Activated CD8-positive, alpha-beta T cell treated with anti-CD3 and anti-CD28 coated beads, Interleukin-2, amount 10 ng/mL, durations not matched to agents 7 days and 5 days (primary cell): ENCODE measurements at regions of chr19 and their contacts with region 1.

Region 1: DNA sequence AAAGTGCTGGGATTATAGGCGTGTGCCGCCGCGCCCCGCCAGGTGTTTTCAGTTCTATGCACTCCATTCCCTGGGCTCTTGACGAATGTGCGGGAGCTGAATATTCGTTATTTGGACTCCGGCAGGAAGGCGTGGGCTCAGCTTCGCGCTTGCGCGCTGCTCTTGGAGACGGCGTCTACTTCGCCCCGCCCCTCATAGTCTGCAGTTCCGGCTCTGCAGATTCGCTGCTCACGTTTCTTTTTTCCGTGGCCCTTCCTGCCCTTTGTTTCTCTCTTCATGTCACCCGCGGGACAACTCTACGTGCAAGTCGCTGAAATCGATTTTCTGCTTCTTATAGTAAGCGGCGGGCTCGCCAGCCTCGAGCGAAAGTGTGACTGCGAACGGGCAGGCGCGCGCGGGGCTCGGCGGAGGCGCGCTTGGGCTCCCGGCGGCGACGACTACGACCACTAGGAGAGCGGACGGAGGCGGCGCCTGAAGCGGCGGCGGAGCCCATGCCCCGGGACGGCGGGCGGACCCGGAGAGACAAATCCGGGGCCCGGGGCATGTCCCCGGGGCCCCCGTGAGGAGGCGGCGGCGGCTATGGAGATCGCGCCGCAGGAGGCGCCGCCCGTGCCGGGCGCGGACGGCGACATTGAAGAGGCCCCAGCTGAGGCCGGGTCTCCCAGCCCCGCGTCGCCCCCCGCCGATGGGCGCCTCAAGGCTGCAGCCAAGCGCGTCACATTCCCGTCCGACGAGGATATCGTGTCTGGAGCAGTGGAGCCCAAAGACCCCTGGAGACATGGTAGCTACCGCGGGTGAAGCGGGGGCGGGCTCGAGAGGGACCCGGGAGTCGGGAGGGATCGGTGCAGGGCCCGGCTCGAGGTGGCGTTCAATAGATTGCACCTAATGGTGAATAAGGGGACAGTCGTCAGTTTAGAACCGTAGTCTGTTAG is at the start of gene PPP1R37:
- DNase-seq: peak; percentile 94
- ATAC-seq: peak; percentile 82
- H3K4me3 Mint-ChIP-seq: peak within 1 kb of the TSS; percentile 83
- H3K27ac Mint-ChIP-seq: peak within 1 kb of the TSS; percentile 95
- H3K4me1 Mint-ChIP-seq: peaks cover 70% of the 10 kb centered on the region
- H3K27me3 Mint-ChIP-seq: no peaks in the 10 kb centered on the region
- total RNA-seq, gene PPP1R37: 28.3 to 29.2 TPM

Region 2: DNA sequence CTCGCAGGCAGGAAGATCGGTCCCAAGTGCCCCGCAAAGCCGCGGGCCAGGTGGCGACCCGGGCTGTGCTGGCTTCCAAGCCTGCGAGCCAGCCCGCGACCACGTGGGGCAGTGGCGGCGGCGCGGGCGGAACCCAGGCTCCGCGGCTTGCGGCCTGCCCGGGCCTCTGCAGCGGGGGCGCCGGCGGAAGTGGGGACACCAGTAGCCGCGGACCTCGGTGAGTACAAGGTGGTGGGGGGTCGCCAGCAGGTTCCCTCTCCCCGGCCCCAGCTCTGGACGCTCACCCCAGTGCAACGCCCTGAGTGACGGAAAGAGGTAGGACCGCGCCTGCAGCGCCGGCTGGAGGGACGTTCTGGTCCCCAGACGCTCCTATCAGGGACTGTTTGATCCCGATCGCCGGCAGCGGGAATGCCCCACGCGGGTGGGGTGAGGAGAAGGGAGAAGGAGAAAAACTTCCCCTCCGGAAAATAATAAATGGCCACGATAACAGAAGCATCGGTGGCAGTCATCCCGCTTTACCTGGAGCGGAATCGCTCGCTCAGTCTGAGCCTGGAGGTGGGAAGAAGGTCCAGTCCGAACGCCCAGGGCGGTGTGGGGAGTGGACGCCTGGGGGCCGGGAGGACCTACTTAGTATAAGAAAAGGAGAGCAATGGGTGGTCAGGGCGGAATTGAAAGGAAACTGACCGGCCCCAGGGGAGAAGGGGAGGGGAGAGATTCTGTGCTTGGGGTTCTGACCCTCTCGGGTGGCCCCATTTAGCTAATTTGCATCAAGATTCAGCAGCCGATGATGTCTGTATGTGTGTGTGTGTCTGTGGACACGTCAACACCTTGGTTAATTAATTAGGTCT is 13.7 kb before region 1 on chr19 and contains the start of gene GEMIN7:
- CTCF ChIA-PET with region 1: interaction called, 5 read pairs
- POLR2A ChIA-PET with region 1: interaction called, 13 read pairs
- DNase-seq: peak; percentile 82
- ATAC-seq: peak; percentile 63
- H3K4me3 Mint-ChIP-seq: peak within 1 kb of the TSS; percentile 98
- H3K27ac Mint-ChIP-seq: peak within 1 kb of the TSS; percentile 86
- H3K4me1 Mint-ChIP-seq: peaks cover 55% of the 10 kb centered on the region
- H3K27me3 Mint-ChIP-seq: no peaks in the 10 kb centered on the region
- total RNA-seq, gene GEMIN7: 30.2 to 31.7 TPM

Region 3: GRCh38 chr19:45103156-45103507 is 10.1 kb after region 1 on chr19:
- CTCF ChIA-PET with region 1: interaction called, 12 read pairs
- POLR2A ChIA-PET with region 1: interaction called, 29 read pairs
- DNase-seq: peak; percentile 71
- ATAC-seq: peak; percentile 85
- H3K4me3 Mint-ChIP-seq: peak overlapping the region; percentile 25
- H3K27ac Mint-ChIP-seq: peak overlapping the region; percentile 80
- H3K4me1 Mint-ChIP-seq: peaks cover 52% of the 10 kb centered on the region
- H3K27me3 Mint-ChIP-seq: no peaks in the 10 kb centered on the region

Region 4: GRCh38 chr19:45125926-45126493 is 33.0 kb after region 1 on chr19:
- CTCF ChIA-PET with region 1: interaction called, 18 read pairs
- POLR2A ChIA-PET with region 1: no interaction called
- DNase-seq: peak; percentile 82
- ATAC-seq: peak; percentile 89
- H3K4me3 Mint-ChIP-seq: no peak overlapping the region
- H3K27ac Mint-ChIP-seq: no peak overlapping the region
- H3K4me1 Mint-ChIP-seq: peaks cover 36% of the 10 kb centered on the region
- H3K27me3 Mint-ChIP-seq: no peaks in the 10 kb centered on the region

Region 5: DNA sequence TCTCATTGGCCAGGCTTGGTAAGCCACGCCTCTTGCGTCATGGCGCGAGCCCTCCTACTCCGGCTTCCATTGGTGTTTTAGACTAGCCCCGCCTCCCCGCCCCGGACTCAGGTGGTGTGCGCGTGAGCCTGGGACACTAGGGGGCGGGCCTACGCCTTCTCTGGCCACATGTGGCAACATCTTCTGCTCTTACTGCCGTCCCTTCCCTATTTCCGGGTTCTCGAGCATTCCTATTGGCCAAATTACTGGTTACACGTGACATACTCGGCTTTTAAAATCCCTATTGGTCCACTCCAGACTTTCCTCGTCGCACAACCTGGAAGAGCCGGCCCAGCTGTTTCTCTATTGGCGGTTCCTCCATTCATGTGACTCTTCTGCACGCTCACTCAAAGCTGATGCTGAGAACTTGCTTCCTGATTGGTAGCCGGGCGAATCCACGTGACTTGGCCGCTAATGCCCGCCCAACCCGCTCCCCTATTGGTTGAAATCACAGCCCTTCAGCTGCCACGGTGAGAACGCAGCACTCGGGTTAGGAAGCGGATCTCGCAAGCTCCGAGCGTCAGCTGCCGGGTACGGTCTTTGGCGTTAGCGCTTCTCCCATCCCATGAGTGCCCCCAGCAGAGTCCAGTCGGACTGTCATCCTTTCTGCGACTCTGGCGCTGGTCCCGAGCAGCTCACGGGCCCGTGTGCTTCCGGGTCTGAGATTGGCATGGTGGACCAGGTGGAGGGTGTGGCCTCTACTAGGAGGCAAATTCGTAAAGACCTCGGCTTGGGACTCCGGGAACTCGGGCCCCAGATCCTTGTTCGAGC is 85.5 kb after region 1 on chr19 and contains the start of gene BLOC1S3:
- CTCF ChIA-PET with region 1: interaction called, 12 read pairs
- POLR2A ChIA-PET with region 1: interaction called, 4 read pairs
- DNase-seq: peak; percentile 100
- ATAC-seq: peak; percentile 91
- H3K4me3 Mint-ChIP-seq: peak within 1 kb of the TSS; percentile 85
- H3K27ac Mint-ChIP-seq: peak within 1 kb of the TSS; percentile 93
- H3K4me1 Mint-ChIP-seq: peaks cover 38% of the 10 kb centered on the region
- H3K27me3 Mint-ChIP-seq: no peaks in the 10 kb centered on the region
- total RNA-seq, gene BLOC1S3: 16.0 to 16.7 TPM

Region 6: GRCh38 chr19:45311621-45312020 is 218.6 kb after region 1 on chr19:
- CTCF ChIA-PET with region 1: no interaction called
- POLR2A ChIA-PET with region 1: no interaction called
- DNase-seq: no peak
- ATAC-seq: no peak
- H3K4me3 Mint-ChIP-seq: no peak overlapping the region
- H3K27ac Mint-ChIP-seq: no peak overlapping the region
- H3K4me1 Mint-ChIP-seq: peaks cover 2% of the 10 kb centered on the region
- H3K27me3 Mint-ChIP-seq: peaks cover 13% of the 10 kb centered on the region